ENCODE measurements at regions of chr6 and their contacts with region 1.

Region 1: DNA sequence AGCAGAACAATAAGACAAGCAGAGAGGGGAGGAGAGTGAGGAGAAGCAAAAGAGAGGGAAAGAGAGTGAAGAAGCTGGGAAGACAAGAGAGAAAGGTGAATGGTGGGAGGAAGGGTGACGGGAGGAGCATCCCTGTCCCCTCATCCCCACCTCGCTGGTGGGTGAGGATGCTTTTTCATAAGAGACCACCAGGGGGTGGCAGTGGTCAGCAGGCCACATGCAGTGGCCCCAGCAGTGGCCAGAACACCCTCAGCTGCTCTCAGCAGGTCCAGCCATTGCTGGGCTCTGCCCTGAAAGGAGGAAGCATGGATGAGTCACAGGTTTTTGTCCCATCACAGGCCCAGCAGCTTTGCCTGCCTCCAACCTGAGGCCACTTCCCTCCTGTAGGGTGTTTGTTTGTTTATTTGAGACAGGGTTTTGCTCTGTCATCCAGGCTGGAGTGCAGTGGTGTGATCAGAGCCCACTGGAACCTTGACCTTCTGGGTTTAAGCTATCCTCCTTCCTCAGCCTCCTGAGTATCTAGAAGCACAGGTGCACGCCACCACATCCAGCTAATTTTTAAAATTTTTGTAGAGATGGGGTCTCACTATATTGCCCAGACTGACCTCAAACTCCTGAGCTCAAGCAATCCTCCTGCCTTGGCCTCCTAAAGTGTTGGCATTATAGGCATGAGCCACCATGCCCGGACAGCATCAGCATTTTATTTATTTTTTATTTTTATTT is 24.0 kb downstream of the FGD2 start:
- DNase-seq: peak; percentile 84 to 96
- H3K4me3 ChIP-seq: no peak overlapping the region
- H3K27ac ChIP-seq: peak overlapping the region; percentile 81
- H3K4me1 ChIP-seq: peaks cover 25% of the 10 kb centered on the region
- H3K27me3 ChIP-seq: no peaks in the 10 kb centered on the region
- CTCF ChIP-seq: peak; percentile 83

Region 2: DNA sequence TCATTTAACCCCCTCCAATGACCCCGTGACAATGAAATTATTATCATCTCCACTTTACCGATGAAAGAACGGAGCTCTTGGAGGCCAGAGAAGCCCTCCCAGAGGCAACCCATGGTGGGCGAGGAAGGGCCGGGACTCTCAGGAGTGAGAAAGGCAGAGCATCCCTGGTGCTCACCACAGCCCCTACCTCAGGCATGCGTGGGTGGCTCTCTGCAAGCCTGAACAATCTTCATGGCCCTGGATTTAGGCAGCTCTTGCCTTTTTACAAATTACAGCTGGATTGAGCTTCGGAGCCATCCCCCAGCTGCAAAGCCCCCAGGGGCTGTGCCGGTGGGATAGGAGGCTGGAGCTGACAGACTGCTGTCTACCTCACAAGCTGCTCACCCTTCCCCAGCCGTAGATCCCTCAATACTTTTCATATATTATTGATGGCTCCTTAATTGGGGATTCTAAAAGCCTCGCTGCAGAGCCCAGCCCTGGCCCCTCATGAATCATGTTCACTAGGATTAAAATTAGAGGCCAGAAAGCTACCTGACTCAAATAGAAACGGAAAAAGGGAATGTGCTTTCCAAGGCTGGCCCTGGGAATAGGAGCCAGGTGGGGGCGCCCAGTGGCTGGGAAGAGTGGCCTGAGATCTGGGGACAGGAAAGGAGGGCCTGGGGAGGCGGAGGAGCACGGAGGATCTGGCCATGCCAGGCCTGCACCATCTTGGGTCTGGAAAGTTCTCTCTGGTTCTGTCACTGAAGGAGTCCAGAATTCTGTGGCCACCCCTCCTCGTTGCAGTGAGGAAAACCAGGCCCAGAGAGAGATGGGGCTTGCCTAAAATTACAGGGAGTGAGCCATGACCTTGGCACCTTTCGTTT is 219.2 kb before region 1 on chr6:
- CTCF ChIA-PET with region 1: no interaction called
- POLR2A ChIA-PET with region 1: no interaction called
- intact Hi-C with region 1: no loop called
- DNase-seq: no peak
- H3K4me3 ChIP-seq: no peak overlapping the region
- H3K27ac ChIP-seq: no peak overlapping the region
- H3K4me1 ChIP-seq: no peaks in the 10 kb centered on the region
- H3K27me3 ChIP-seq: no peaks in the 10 kb centered on the region
- CTCF ChIP-seq: no peak

Region 3: GRCh38 chr6:37051138-37052026 is 22.0 kb after region 1 on chr6:
- CTCF ChIA-PET with region 1: interaction called, 5 read pairs
- POLR2A ChIA-PET with region 1: interaction called, 4 read pairs
- intact Hi-C with region 1: loop called (anchors 1 kb)
- DNase-seq: peak; percentile 52 to 82
- H3K4me3 ChIP-seq: no peak overlapping the region
- H3K27ac ChIP-seq: no peak overlapping the region
- H3K4me1 ChIP-seq: peaks cover 48% of the 10 kb centered on the region
- H3K27me3 ChIP-seq: no peaks in the 10 kb centered on the region
- CTCF ChIP-seq: peak; percentile 89

Region 4: GRCh38 chr6:37102279-37103168 is 73.1 kb after region 1 on chr6:
- CTCF ChIA-PET with region 1: no interaction called
- POLR2A ChIA-PET with region 1: no interaction called
- intact Hi-C with region 1: loop called (anchors 2 kb)
- DNase-seq: peak; percentile 77 to 87
- H3K4me3 ChIP-seq: peak overlapping the region; percentile 43; the same call in 1 of the 2 replicates
- H3K27ac ChIP-seq: peak overlapping the region; percentile 97
- H3K4me1 ChIP-seq: peaks cover 55% of the 10 kb centered on the region
- H3K27me3 ChIP-seq: no peaks in the 10 kb centered on the region
- CTCF ChIP-seq: no peak

Region 5: DNA sequence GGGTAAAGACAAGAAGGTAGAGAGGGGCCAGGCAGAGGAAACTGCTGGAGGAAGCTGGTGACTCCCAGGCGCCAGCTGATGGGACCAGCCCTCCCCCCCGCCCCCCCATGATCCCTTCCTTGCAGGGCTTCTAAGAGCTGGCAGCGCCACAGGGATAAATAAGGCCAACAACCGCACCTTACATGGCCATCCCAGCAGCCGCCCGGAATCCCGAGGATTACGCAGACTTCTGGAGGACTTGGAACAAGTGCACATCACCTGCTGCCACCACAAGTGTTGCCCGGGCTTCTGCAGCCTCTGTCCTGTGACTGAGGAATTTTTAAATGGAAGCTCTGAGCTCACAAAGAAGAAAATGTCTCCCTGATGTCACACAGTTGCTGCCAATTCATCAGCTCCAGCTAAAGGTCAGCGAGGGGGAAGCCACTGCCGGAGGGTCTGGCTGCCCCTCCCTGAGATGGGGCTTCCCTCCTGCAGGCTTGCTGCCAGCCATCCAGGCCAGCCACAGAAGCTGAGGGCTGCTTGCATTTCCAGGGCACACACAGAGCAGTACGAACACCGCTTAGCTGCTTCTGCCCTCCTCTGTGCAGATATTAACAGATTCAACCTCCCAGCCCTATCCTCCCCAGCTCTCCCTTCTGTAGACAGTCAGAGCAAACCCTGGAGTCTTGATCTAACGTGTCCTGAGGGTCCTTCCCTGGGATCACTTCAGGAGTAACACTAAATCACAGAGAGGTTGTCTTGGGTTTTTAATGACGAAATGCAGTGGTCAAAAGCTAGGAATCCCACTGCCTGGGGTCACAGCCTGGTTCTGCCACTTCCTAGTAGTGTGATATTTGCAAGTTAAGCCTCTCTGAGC is 101.9 kb after region 1 on chr6:
- CTCF ChIA-PET with region 1: interaction called, 8 read pairs
- POLR2A ChIA-PET with region 1: interaction called, 11 read pairs
- intact Hi-C with region 1: loop called (anchors 10 kb)
- DNase-seq: peak; percentile 66 to 73
- H3K4me3 ChIP-seq: peak overlapping the region; percentile 51; the same call in 1 of the 2 replicates
- H3K27ac ChIP-seq: peak overlapping the region; percentile 95
- H3K4me1 ChIP-seq: peaks cover 93% of the 10 kb centered on the region
- H3K27me3 ChIP-seq: no peaks in the 10 kb centered on the region
- CTCF ChIP-seq: no peak

Region 6: GRCh38 chr6:37137201-37138090 is 108.0 kb after region 1 on chr6:
- CTCF ChIA-PET with region 1: interaction called, 3 read pairs
- POLR2A ChIA-PET with region 1: no interaction called
- intact Hi-C with region 1: loop called (anchors 10 kb)
- DNase-seq: peak; percentile 81 to 98
- H3K4me3 ChIP-seq: peak overlapping the region; percentile 56
- H3K27ac ChIP-seq: peak overlapping the region; percentile 98
- H3K4me1 ChIP-seq: peaks cover 88% of the 10 kb centered on the region
- H3K27me3 ChIP-seq: no peaks in the 10 kb centered on the region
- CTCF ChIP-seq: no peak

Region 7: DNA sequence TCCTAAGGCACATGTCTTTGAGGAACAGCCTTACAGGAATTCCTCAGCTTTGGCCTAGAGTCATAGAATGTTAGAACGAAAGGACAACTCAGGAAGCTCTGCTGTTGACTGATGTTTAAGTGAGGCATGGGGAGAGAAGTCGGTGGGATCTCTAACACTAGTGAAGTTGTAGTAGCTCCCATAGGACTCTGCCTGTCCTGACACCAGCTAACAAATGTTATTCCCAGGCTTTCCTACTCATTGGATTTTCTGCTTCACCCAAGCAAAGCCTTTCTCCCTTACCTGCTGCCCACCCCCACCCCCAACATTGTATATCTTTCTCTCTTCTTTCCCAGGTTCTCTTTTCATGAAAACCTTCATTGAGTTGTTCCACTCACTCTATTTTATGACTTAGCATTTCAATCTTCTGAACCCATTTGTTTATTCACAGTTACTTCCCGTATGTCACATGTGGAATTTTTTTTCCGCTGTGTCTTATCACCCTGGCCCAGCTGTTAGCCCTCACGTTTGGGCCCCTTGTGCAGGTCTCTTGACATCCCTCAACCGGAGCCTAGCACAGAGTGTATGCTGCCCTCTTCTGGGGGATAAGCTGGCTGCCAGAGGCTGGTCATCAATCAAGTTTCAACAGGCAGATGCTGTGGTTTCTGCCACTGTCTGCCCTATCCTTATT is 285.2 kb after region 1 on chr6:
- CTCF ChIA-PET with region 1: no interaction called
- POLR2A ChIA-PET with region 1: no interaction called
- intact Hi-C with region 1: loop called (anchors 1 kb)
- DNase-seq: no peak
- H3K4me3 ChIP-seq: no peak overlapping the region
- H3K27ac ChIP-seq: no peak overlapping the region
- H3K4me1 ChIP-seq: peaks cover 9% of the 10 kb centered on the region
- H3K27me3 ChIP-seq: no peaks in the 10 kb centered on the region
- CTCF ChIP-seq: peak; percentile 57